Posterior cingulate gyrus (tissue), 11 donors: ENCODE measurements at regions of chr10 and their contacts with region 1.

Region 1: GRCh38 chr10:96374985-96375830 is 16.4 kb upstream of the OPALIN start:
- DNase-seq: peak; percentile 80 to 98 (median 92)

Region 2: DNA sequence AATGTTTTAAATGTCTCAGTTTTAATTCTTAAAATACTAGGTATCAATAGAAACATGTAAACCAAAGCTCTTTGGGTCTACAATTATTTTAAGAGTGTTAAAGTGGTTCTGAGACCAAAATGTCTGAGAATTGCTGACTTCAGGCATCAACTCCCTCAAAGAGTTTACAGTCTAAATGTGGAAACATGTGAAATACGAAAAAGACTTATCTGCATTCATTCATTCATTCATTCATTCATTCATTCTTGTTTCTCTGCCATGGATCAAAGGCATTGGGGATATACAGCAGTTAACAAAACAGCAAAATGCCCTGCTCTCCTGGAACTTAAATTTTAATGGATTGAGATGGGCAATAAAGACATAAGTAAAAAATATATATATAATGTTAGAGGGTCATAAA is 173.7 kb before region 1 on chr10:
- intact Hi-C with region 1: no loop called
- DNase-seq: no peak

Region 3: DNA sequence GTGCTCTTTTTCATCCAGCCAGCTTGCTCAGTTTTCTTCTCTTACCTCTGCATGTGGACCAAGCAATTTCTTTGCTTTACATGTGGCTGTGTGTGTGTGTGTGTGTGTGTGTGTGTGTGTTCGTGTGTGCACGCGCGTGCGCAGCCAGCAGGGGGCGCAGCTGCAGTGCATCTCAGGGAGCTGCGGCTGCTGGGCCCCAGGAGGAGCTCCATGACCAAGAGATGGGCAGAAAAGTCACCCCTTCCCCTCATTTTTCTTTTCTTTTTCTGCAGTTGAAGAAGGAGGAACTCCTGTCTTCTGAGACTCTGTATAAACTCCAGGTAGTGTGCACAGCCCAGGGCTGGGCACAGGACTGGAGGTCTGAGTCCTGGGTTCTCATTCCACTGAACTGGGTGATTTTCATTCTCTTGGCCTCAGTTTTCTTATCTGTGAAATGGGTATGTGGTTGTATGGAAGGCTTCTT is 145.6 kb before region 1 on chr10:
- intact Hi-C with region 1: no loop called
- DNase-seq: peak in 9 of 10 donors; percentile 26 to 92 (median 66)

Region 4: GRCh38 chr10:96334616-96335526 is 40.3 kb before region 1 on chr10:
- intact Hi-C with region 1: loop called (anchors 2 kb)
- DNase-seq: peak in 1 of 10 donors; percentile 39

Region 5: DNA sequence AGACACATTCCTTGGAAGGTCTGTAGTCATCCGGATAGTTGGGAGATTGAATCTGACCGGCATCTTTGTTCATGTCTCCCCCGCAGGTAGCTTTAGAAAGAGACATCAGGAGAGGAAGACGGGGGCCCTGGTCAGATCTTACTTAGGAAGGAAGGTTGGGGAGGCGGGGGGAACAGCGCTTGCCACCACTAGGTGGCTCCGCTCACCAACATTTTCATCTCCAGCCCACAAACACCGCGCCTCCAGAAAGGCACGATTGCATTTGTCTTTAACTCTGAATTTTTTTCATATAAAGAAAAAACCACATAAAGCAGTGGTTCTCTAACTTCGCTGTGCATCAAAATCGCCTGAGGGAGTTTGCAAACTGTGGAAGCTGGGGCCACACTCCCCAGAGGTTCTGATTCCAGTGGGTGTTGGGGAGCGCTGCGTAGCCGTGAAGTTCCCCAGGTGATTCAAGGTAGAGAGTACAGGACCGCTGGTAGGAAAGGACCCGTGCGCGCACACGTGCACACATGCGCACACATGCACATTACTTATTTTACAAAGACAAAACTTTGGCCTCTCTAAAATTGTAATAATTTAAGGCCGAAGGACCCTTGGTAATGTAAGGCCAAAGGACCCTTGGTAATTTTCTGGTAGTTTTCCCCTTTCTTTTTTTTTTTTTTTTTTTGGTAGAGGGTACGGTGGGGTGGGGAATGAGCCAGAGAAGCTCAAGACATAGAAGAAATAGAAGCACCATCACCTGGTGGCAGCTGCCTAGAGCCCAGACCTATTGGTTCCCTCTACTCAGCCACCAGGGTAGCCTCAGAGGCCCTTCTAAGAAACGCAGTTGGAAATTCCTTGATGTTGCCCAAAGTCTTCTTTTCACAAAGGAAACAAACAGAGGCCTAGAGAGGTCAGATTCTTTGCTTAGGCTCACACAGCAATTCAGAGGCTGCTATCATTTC is 21.0 kb after region 1 on chr10:
- intact Hi-C with region 1: loop called (anchors 1 kb)
- DNase-seq: peak; percentile 53 to 96 (median 74)

Region 6: GRCh38 chr10:96513698-96514561 is 138.7 kb after region 1 on chr10 and contains the start of gene TLL2:
- intact Hi-C with region 1: loop called (anchors 5 kb)
- DNase-seq: peak; percentile 82 to 99 (median 88)

Region 7: GRCh38 chr10:96556003-96556402 is 180.8 kb after region 1 on chr10:
- intact Hi-C with region 1: loop called (anchors 5 kb)
- DNase-seq: peak in 2 of 10 donors; percentile 5 to 26

Region 8: DNA sequence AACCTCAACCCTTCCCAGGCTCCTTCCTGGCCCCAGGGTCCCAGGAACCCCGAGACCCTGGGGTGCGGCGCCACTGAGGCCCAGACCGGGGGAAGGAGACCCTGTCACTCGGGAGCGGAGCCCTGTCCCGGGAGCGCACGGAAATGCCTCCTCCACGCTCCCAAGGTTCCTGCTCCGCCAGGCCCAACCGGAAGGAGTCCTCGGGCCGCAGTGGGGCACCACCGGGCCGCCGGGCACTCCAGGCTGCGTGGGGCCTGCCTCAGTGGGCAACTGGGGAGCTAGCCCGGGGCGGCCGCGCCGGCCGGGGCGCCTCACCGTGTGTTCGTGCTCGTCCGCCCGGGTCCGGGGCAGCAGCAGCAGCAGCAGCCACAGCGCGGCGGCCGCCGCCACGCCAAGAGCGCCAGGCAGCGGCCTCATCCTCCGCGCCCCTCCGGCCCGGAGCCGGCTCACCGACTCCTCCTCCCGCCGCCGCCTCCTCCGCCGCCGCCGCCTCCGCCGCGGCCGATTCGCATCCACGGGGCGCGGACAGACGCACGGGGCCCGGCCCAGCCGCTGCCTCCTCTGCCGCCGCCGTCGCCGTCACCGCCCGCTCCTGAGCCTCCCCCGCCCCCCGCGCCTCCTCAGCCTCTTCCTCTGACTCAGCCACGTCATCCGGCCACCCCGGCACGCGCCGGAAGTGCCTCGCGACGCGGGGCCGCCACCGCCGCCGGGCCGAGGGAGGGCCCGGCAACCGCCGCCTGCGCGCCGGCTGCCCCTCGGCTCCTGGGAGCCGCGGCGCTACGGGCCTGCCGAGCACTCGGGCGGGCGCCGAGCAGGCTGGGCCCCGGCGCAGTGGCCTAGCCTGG is 211.4 kb after region 1 on chr10 and contains the start of gene TM9SF3:
- intact Hi-C with region 1: loop called (anchors 10 kb)
- DNase-seq: peak; percentile 82 to 98 (median 90)

Region 9: DNA sequence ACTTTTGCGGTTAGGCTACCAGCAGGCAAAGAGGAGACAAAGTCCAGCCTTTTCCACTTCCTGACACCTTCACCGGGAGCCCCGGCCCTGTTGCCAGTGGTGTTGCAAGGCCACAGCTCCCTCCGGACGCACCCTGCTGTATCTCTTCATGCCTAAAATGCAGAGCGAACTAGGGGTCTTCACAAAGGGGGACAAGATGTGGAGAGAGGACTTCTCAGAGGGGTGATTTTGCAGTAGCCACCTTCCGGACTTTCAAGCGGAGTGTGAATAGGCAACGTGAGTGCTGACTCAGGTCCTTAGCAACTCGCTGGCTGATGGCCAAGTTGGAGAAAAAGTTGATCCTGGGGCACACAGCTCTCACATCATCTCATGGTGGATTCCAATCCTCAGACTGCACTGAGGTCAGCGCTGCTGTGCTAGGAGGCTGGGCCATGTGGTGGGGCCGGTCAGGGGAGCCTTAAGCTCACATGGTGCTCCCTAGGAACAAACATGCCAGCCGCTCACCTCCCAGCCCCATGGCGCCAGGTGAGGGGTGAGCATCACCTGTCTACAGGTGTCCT is 623.2 kb after region 1 on chr10:
- intact Hi-C with region 1: no loop called
- DNase-seq: no peak

Region 10: DNA sequence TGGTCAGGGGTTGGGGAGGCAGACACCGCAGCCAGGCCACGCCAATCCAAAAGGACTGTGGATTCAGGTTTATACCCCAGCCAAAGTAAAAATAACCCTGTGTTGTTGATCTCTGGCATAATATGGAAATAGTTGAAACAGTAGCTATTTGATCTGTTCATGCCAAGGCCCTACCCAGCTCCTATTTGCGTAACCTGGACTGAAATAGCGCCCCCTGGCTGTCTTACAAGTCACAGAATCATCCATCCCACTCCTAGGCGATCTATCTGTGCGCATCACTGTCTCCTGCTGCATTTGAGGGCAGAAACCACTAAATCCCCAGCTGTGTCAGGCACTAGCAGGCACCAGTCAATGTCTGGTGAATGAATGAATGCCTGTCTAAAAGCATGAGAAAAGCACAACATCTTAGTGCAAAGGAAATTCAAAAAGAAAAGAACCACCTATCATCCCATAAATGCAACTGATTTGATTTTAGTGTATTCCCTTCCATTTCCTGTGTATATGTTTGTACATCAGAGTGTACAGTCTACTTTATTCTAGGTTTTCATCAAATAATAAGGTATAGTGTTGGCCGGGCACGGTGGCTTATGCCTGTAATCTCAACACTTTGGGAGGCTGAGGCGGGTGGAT is 650.5 kb after region 1 on chr10:
- intact Hi-C with region 1: loop called (anchors 10 kb)
- DNase-seq: peak in 6 of 10 donors; percentile 48 to 92 (median 70)